Activated T-helper 2 cell treated with anti-CD3 and anti-CD28 coated beads, Interferon-gamma antibody, Interleukin-2, Interleukin-4, amounts not matched to agents 10 μg/mL and 5 μg/mL and 100 μg/mL, durations not matched to agents 14 hours and 24 hours and 36 hours (primary cell): ENCODE measurements at regions of chr12 and their contacts with region 1.

Region 1: DNA sequence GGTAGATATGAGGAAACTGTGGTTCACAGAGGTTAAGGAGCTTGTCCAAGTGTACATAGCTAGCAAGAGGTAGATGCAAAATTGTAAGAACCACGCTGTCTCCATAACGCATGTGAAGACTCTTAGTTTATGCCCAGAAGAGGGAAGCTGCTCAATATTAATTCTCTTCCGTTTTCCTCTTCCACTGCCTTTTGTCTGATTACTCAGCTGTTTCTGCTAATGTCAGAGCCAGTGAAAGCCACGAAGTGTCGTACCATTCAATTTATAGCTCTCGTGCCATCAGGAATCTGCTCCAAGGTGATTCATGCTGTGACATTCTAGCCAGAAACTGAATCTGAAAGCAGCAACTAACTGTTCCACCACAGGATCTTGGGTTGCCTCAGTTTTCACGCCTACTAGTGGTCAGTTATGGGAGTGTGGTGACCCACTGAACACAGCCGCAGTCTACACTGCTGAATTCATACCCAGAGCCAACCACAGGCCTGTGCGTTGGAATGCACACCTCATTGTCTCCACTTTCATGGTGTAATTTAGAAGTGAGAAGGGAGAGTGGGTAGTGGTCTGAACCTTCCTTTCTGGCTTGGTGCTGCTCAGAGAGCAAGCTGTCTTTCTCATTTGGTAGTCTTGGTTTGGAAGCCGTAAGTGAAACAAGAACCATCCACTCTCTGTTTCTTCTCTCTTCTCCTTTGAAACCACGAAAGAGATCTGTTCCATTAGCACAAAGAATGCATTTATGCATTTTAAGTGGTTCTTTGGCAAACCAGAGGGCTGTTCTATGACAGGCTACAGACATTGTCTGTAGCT is 74.2 kb upstream of the NAP1L1 start:
- DNase-seq: peak; percentile 73
- H3K4me3 Mint-ChIP-seq: peak overlapping the region; percentile 38
- H3K27ac Mint-ChIP-seq: peak overlapping the region; percentile 46
- H3K4me1 Mint-ChIP-seq: peaks cover 30% of the 10 kb centered on the region
- H3K27me3 Mint-ChIP-seq: peaks cover 12% of the 10 kb centered on the region

Region 2: DNA sequence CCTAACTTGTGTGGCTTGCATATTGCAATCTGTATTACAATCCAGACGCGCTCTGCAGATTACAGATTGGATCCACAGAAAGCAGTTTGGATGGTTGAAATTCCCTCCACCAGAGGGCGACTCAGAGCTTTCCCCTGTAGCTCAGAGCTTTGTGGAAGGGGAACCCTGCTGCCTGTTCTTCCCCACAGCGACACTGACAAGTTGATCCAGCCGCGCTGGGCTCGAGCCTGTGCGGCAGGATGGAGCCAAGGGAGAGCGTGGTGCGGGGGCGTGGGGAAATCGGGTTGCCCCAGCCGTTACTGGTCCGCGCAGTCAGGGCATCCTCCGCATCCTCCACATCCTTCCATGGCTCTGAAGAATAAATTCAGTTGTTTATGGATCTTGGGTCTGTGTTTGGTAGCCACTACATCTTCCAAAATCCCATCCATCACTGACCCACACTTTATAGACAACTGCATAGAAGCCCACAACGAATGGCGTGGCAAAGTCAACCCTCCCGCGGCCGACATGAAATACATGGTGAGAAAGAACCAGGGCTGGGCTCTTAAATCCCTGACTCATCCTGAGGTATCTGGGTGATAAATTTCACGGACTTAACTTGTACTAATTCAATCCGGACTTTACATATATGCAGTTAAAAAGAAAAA is 824.2 kb before region 1 on chr12 and contains the start of gene GLIPR1L1:
- intact Hi-C with region 1: loop called (anchors 10 kb)
- DNase-seq: peak; percentile 68
- H3K4me3 Mint-ChIP-seq: peak within 1 kb of the TSS; percentile 73
- H3K27ac Mint-ChIP-seq: no peak within 1 kb of the TSS
- H3K4me1 Mint-ChIP-seq: peaks cover 23% of the 10 kb centered on the region
- H3K27me3 Mint-ChIP-seq: peaks cover 52% of the 10 kb centered on the region
- total RNA-seq, gene GLIPR1L1: not detected in 2 replicates

Region 3: DNA sequence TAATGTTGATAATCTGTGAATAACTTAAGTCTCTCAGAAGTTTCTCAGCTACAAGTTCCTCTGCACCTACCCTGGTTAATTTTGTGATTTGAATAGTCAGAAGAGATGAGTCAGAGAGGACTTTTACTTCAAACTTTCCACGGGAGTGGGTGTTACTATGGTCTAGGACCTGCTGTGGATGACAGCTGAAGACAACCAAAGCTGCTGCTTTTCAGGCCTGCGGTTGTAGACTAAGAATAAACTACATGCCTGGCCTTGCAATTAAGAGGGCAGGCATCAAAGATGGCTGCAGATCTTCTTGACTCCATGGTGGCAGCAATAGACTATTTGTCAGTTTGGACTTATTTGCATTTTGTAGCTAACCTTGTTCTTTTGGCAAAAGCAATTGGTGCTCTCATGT is 420.2 kb before region 1 on chr12:
- intact Hi-C with region 1: loop called (anchors 10 kb)
- DNase-seq: no peak
- H3K4me3 Mint-ChIP-seq: no peak overlapping the region
- H3K27ac Mint-ChIP-seq: peak overlapping the region; percentile 33
- H3K4me1 Mint-ChIP-seq: peaks cover 20% of the 10 kb centered on the region
- H3K27me3 Mint-ChIP-seq: peaks cover 23% of the 10 kb centered on the region

Region 4: DNA sequence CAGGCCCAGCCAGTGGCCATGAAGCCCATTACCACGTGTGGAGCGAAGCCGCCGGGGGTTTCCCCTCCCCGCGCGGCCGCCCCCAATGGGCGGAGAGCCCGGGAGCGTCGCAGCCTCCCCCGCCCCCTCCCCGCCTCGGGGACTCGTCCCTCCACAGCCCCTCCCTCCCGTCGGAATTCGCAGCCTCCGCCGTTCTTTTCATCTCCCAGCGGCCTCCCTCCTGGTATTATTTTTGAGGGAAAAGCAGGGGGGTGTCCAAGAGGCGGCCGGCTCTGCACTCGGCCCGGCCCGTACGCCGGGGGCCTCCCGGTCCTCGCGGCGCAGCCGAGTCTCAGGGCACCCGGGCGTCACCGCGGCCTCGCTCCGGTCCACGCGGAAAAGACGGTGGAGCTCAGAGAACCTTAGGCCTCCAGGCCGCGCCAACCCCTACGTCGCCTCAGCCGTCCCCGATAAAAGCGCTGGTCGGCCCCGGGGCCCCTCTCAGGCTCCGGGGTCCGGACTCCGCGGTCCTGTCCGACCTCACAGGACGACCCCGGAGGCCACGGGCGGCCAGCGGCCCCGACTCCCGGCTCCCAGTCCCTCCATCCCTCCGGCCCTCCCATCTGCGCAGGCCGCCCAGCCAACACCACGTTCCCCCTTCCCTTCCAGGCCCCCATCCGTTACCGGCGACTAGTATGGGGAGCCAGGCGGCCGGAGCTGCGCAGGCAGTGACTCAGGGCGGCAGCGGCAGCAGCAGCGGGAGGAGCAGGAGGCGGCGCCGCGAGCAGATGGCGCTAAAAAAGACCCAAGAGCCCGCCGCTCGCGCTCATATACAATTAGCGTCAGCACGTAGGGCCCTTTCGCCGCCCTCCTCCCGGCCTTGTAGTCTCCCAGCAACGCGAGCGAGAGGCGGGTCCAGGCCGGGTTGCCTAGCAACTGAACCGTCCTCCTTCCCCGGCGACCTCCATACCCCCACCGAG is 74.5 kb before region 1 on chr12 and contains the start of gene NAP1L1:
- intact Hi-C with region 1: loop called (anchors 1 kb)
- DNase-seq: peak; percentile 96
- H3K4me3 Mint-ChIP-seq: peak within 1 kb of the TSS; percentile 94
- H3K27ac Mint-ChIP-seq: peak within 1 kb of the TSS; percentile 99
- H3K4me1 Mint-ChIP-seq: peaks cover 44% of the 10 kb centered on the region
- H3K27me3 Mint-ChIP-seq: no peaks in the 10 kb centered on the region
- total RNA-seq, gene NAP1L1: 701 and 744 TPM in 2 replicates

Region 5: GRCh38 chr12:76255692-76256091 is 97.0 kb after region 1 on chr12:
- intact Hi-C with region 1: loop called (anchors 2 kb)
- DNase-seq: no peak
- H3K4me3 Mint-ChIP-seq: no peak overlapping the region
- H3K27ac Mint-ChIP-seq: no peak overlapping the region
- H3K4me1 Mint-ChIP-seq: peaks cover 12% of the 10 kb centered on the region
- H3K27me3 Mint-ChIP-seq: peaks cover 12% of the 10 kb centered on the region

Region 6: DNA sequence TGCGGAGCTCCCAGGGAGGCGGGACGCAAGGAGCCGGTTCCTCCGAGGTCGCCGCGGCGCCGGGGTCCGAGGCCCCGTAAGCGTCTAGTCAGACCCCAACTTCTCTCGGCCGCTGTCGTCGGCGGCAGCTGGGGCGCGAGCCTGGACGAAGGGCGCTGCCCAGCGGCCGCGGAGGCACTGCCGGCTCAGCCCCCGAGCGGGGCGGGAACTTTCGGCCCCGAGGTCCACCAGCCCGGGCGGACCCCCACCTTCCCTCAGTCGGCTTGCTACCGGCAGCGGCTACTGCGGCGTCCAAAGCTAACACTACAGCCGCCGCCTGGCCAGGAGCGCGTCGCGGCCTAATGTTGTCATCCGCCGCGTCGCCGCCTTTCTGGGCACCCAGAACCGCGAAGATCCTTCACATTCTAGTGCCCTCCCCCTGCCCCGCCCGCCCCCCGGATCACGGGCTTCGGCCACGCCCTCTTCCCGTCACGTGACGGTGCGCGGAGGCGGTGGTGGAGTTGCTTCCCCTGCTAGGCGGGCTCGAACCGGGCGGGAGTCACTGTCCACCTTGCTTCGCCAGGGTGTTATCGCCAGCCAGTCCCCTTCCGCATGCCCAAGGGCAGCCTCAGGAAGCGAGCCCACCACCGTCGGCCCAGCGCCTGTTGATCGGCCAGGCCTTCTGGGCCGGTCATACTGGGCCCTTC is 400.8 kb after region 1 on chr12 and contains the start of gene OSBPL8:
- intact Hi-C with region 1: loop called (anchors 2 kb)
- DNase-seq: peak; percentile 89
- H3K4me3 Mint-ChIP-seq: peak within 1 kb of the TSS; percentile 93
- H3K27ac Mint-ChIP-seq: peak within 1 kb of the TSS; percentile 96
- H3K4me1 Mint-ChIP-seq: peaks cover 39% of the 10 kb centered on the region
- H3K27me3 Mint-ChIP-seq: no peaks in the 10 kb centered on the region
- total RNA-seq, gene OSBPL8: 87.9 TPM in 2 replicates

Region 7: GRCh38 chr12:77429426-77429825 is 1270.7 kb after region 1 on chr12:
- intact Hi-C with region 1: no loop called
- DNase-seq: no peak
- H3K4me3 Mint-ChIP-seq: no peak overlapping the region
- H3K27ac Mint-ChIP-seq: no peak overlapping the region
- H3K4me1 Mint-ChIP-seq: no peaks in the 10 kb centered on the region
- H3K27me3 Mint-ChIP-seq: no peaks in the 10 kb centered on the region